Activated CD4-positive, alpha-beta T cell treated with anti-CD3 and anti-CD28 coated beads for 36 hours (primary cell): ENCODE measurements at regions of chr3 and their contacts with region 1.

Region 1: DNA sequence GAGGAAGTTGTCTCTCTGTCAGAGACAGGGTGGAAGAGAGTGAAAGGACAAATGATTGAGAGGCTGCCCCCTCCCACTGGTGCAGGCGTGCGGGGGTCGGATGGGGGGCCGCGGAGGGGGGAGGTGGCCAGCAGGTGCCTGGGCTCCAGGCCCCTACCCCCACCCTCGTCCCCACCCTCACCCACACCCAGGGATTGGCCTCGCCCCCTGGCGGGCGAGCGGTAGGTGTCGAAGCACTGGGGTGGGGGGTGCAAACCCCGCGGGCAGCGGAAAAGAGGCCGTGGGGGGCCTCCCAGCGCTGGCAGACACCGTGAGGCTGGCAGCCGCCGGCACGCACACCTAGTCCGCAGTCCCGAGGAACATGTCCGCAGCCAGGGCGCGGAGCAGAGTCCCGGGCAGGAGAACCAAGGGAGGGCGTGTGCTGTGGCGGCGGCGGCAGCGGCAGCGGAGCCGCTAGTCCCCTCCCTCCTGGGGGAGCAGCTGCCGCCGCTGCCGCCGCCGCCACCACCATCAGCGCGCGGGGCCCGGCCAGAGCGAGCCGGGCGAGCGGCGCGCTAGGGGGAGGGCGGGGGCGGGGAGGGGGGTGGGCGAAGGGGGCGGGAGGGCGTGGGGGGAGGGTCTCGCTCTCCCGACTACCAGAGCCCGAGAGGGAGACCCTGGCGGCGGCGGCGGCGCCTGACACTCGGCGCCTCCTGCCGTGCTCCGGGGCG is at the start of gene KAT2B:
- DNase-seq: peak; percentile 91
- ATAC-seq: peak; percentile 68
- H3K4me3 Mint-ChIP-seq: peak within 1 kb of the TSS; percentile 95
- H3K27ac Mint-ChIP-seq: peak within 1 kb of the TSS; percentile 93
- H3K4me1 Mint-ChIP-seq: peaks cover 50% of the 10 kb centered on the region
- H3K27me3 Mint-ChIP-seq: no peaks in the 10 kb centered on the region
- total RNA-seq, gene KAT2B: 17.2 to 18.5 TPM

Region 2: GRCh38 chr3:18444595-18445400 is 1595.1 kb before region 1 on chr3:
- CTCF ChIA-PET with region 1: no interaction called
- POLR2A ChIA-PET with region 1: no interaction called
- intact Hi-C with region 1: loop called in 1 of 2 experiments (anchors 5 kb)
- DNase-seq: peak; percentile 89
- ATAC-seq: peak; percentile 66
- H3K4me3 Mint-ChIP-seq: peak overlapping the region; percentile 96
- H3K27ac Mint-ChIP-seq: peak overlapping the region; percentile 91
- H3K4me1 Mint-ChIP-seq: peaks cover 25% of the 10 kb centered on the region
- H3K27me3 Mint-ChIP-seq: no peaks in the 10 kb centered on the region

Region 3: GRCh38 chr3:19885468-19885867 is 154.5 kb before region 1 on chr3:
- CTCF ChIA-PET with region 1: no interaction called
- POLR2A ChIA-PET with region 1: no interaction called
- intact Hi-C with region 1: loop called (anchors 1 to 10 kb)
- DNase-seq: peak; percentile 9
- ATAC-seq: peak; percentile 36
- H3K4me3 Mint-ChIP-seq: no peak overlapping the region
- H3K27ac Mint-ChIP-seq: no peak overlapping the region
- H3K4me1 Mint-ChIP-seq: no peaks in the 10 kb centered on the region
- H3K27me3 Mint-ChIP-seq: no peaks in the 10 kb centered on the region

Region 4: DNA sequence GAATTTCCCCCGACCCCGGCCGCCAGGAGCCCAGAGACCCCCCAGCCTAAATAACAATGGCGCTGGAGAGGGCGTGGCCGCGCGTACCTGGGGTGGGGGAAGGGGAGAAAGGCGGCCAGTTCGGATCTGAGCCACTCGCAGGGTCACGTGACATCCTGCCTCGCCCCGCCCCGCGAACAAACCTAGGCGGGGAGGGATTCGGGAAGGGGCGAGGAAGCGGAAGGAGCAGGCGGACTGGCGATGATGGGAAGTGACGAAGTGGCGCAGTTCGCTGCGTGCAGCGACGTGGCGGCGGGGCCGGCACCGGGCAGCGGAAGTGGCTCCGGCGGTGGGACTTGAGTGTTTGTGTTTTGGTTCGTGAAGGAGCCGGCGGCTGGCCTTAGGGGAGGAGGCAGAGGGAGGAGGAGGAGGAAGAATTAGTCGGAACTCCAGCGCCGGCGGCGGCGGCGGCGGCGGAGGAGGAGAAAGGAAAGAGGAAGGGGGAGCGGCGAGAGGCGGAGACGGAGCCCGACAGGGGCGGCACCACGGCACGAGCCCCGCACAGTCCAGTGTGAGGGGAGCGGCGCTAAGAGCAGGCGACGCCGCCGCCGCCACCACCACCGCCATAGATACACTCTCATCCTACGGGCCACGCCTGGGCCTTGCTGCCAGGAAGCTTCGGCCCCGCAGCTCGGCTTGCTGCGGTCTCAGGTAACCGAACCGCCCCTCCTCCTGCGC is 92.9 kb before region 1 on chr3 and contains the start of gene RAB5A:
- CTCF ChIA-PET with region 1: interaction called, 4 read pairs
- POLR2A ChIA-PET with region 1: interaction called, 7 read pairs
- intact Hi-C with region 1: loop called (anchors 1 kb)
- DNase-seq: peak; percentile 99
- ATAC-seq: peak; percentile 90
- H3K4me3 Mint-ChIP-seq: peak within 1 kb of the TSS; percentile 96
- H3K27ac Mint-ChIP-seq: peak within 1 kb of the TSS; percentile 99
- H3K4me1 Mint-ChIP-seq: peaks cover 40% of the 10 kb centered on the region
- H3K27me3 Mint-ChIP-seq: no peaks in the 10 kb centered on the region
- total RNA-seq, gene RAB5A: 54.2 to 78.8 TPM

Region 5: GRCh38 chr3:20068512-20069166 is 28.7 kb after region 1 on chr3:
- CTCF ChIA-PET with region 1: no interaction called
- POLR2A ChIA-PET with region 1: no interaction called
- intact Hi-C with region 1: no loop called
- DNase-seq: no peak
- ATAC-seq: no peak
- H3K4me3 Mint-ChIP-seq: no peak overlapping the region
- H3K27ac Mint-ChIP-seq: peak overlapping the region; percentile 47
- H3K4me1 Mint-ChIP-seq: peaks cover 27% of the 10 kb centered on the region
- H3K27me3 Mint-ChIP-seq: no peaks in the 10 kb centered on the region

Region 6: GRCh38 chr3:20104167-20104661 is 64.3 kb after region 1 on chr3:
- CTCF ChIA-PET with region 1: interaction called, 5 read pairs
- POLR2A ChIA-PET with region 1: no interaction called
- intact Hi-C with region 1: loop called in 1 of 2 experiments (anchors 1 kb)
- DNase-seq: peak; percentile 39
- ATAC-seq: peak; percentile 78
- H3K4me3 Mint-ChIP-seq: peak overlapping the region; percentile 26
- H3K27ac Mint-ChIP-seq: peak overlapping the region; percentile 84
- H3K4me1 Mint-ChIP-seq: peaks cover 27% of the 10 kb centered on the region
- H3K27me3 Mint-ChIP-seq: no peaks in the 10 kb centered on the region